Colonic mucosa (tissue), 4 donors: ENCODE measurements at regions of chr12 and their contacts with region 1.

Region 1: DNA sequence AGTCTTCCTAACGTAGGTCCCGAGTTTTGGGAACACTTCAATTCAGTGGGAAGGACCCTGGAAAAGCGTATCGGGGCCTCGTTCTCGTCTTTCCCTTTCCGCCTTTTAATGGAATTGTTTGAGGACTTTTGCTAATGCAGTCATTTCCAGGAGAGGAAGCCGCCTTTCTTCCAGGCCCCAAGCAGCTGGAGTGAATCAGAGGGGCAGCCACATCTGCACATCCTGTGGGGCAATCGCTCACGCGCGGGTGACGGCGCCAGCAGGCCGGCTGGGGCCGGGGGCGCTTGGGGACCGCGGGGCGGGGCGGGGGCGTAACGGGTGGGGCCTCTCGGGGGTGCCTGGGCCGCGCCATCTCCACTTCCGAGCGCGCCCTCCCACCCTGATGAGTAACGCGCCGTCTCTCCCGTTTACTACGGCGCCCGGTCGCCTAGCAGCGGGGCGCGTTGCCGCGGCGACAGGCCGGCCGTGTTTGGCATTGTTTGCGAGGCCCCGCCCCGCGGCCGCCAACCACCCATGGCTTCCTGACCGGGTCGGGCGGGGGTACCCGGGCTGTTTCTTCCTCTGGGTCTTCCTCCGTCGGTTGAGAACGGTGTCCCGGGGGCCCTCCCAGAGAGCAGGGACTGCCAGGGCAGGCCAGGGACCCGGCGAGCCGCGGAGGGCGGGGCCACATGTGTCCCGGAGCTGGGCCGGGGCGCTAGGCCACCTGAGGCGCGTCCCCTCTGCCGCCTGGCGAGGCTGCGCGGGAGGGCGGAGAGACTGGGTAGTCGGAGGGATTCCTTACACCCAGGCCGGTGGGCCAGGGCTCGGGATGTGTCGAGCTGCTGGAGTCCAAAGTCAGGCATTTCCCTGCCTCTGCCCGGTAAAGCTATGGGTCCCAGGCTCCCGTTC is 2.3 kb downstream of the GSG1 start:
- DNase-seq: peak; percentile 92
- H3K4me3 ChIP-seq: peak overlapping the region; percentile 45
- H3K27ac ChIP-seq: peak overlapping the region; percentile 82
- H3K4me1 ChIP-seq: peaks cover 27% of the 10 kb centered on the region
- H3K27me3 ChIP-seq: no peaks in the 10 kb centered on the region
- CTCF ChIP-seq: no peak

Region 2: GRCh38 chr12:12916135-12916944 is 184.8 kb before region 1 on chr12:
- intact Hi-C with region 1: loop called (anchors 5 kb)
- DNase-seq: peak; percentile 89
- H3K4me3 ChIP-seq: no peak overlapping the region
- H3K27ac ChIP-seq: no peak overlapping the region
- H3K4me1 ChIP-seq: no peaks in the 10 kb centered on the region
- H3K27me3 ChIP-seq: no peaks in the 10 kb centered on the region
- CTCF ChIP-seq: peak; percentile 98

Region 3: GRCh38 chr12:13196130-13196921 is 95.2 kb after region 1 on chr12 and contains the start of gene EMP1:
- intact Hi-C with region 1: loop called (anchors 5 kb)
- DNase-seq: peak; percentile 96
- H3K4me3 ChIP-seq: peak within 1 kb of the TSS; percentile 39
- H3K27ac ChIP-seq: peak within 1 kb of the TSS; percentile 87
- H3K4me1 ChIP-seq: peaks cover 13% of the 10 kb centered on the region
- H3K27me3 ChIP-seq: no peaks in the 10 kb centered on the region
- CTCF ChIP-seq: no peak
- total RNA-seq, gene EMP1: 265 to 667 TPM

Region 4: DNA sequence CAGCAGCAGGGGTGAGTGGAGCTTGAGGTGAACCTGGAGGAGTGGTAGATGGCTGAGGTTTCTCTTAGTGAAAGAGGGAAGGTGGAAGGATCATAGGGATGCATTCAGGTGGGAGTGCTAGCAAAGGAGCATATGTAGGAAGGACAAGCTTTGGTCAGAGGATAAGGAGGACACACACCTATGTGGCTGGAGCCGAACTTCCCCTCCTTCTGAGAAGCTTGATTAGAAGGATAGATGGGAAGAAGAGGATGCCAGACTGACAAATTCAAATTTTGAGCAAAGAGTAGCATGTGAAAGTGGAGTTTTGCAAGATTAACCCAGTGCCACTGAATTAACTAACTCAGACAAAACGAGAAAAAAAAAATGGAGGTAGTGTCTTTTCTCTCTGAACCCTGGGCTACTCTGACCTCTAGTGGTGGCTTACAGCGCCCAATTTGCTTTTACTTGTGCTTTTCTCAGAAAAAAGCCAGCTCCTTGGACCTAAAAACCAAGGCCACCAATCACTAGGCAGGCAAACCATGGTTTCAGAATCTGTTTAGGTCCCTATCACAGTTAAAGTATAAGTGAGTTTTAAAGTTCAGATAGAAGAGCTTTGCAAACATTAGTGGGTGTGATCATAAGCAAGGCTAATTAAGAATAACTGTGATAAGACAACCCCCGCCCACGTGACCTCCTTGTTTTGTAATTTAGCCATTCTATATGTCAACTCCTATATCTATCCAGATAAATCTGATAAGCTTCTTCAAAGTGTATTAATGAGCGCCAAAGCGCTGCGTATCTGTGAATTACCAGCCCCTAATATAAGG is 110.9 kb after region 1 on chr12:
- intact Hi-C with region 1: loop called (anchors 5 kb)
- DNase-seq: peak; percentile 76
- H3K4me3 ChIP-seq: no peak overlapping the region
- H3K27ac ChIP-seq: no peak overlapping the region
- H3K4me1 ChIP-seq: no peaks in the 10 kb centered on the region
- H3K27me3 ChIP-seq: no peaks in the 10 kb centered on the region
- CTCF ChIP-seq: peak; percentile 73

Region 5: DNA sequence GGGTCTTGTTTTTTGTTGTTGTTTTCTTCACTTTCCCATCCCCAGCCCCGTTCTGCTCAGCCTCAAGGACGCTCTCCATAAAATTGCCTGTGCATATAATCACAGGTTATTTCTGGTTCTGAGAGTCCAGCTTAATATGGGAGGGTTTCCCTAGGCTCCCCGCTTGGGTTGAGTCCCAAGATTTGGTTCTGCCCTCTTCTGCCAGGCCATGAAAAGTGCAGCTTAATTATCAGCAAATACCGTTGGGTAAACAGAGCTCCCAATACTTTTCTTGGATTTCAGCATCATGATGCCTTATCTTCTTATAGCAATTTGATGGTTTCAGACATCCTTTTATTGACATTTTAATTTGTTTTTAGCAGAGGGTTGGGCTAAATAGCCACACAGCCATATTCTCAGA is 804.7 kb after region 1 on chr12:
- intact Hi-C with region 1: no loop called
- DNase-seq: no peak
- H3K4me3 ChIP-seq: no peak overlapping the region
- H3K27ac ChIP-seq: no peak overlapping the region
- H3K4me1 ChIP-seq: no peaks in the 10 kb centered on the region
- H3K27me3 ChIP-seq: no peaks in the 10 kb centered on the region
- CTCF ChIP-seq: no peak